ENCODE measurements at regions of chr9 and their contacts with region 1.

Region 1: DNA sequence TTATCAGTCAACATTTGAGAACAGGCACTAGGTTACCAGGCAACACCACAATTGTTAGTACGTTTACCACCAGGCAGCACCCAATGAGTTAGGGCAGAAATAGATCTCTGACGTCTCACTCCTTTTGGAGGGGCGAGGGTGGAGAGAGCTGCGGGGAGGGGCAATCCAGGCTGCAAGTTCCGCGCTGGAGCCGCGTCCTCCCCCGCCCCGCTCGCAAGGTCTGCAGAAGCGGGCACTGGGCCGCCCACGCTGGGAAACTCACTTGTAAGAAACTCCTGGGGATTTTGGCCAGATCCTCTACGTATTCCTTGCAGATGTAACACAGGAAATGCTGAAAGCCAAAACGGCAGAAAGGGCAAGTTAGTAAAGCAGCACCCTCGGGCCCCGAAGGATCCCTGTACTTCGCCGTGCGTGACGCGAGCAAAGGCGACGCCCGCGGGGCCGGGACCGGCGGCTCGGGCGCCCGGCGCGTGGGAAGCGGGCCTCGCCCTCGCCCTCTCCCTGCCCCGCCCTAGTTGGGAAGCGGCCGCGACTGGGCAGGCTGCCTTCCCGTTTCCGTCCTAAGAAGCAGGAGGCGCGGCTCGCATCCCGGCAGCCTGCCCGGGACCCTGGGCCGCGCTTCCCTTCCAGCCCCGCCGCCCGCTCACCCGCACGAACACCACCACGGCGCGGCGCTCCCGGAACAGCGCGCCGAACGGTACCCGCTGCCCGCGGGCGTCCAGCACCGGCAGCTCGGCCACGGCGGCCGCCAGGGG is 497 bp downstream of the PRXL2C start:
- DNase-seq: peak; percentile 81
- H3K4me3 ChIP-seq: peak overlapping the region; percentile 63 to 76 (median 65)
- H3K27ac ChIP-seq: peak overlapping the region; percentile 94 to 96 (median 96)
- H3K4me1 ChIP-seq: peaks cover 6 to 18% (median 10%) of the 10 kb centered on the region in 4 donors
- H3K27me3 ChIP-seq: no peaks in the 10 kb centered on the region
- CTCF ChIP-seq: peak in 1 of 5 experiments; percentile 14
- EP300 ChIP-seq: no peak
- POLR2A ChIP-seq: peak; percentile 38

Region 2: GRCh38 chr9:96418074-96418809 is 236.4 kb before region 1 on chr9 and contains the start of gene ZNF367:
- in situ Hi-C with region 1: no loop called
- intact Hi-C with region 1: loop called (anchors 10 kb)
- DNase-seq: peak; percentile 98
- H3K4me3 ChIP-seq: peak within 1 kb of the TSS; percentile 67 to 85 (median 72)
- H3K27ac ChIP-seq: peak within 1 kb of the TSS; percentile 99
- H3K4me1 ChIP-seq: peaks cover 16 to 44% (median 30%) of the 10 kb centered on the region in 4 donors
- H3K27me3 ChIP-seq: no peaks in the 10 kb centered on the region
- CTCF ChIP-seq: no peak
- EP300 ChIP-seq: no peak
- POLR2A ChIP-seq: peak; percentile 5
- total RNA-seq, gene ZNF367: 1.2 to 2.1 (median 1.4) TPM in 3 of 4 donors, not detected in the other

Region 3: GRCh38 chr9:96566498-96567207 is 88.0 kb before region 1 on chr9:
- in situ Hi-C with region 1: no loop called
- intact Hi-C with region 1: loop called (anchors 1 kb)
- DNase-seq: peak; percentile 90
- H3K4me3 ChIP-seq: peak overlapping the region; percentile 75 to 83 (median 82)
- H3K27ac ChIP-seq: peak overlapping the region; percentile 95 to 97 (median 97)
- H3K4me1 ChIP-seq: peaks cover 0 to 34% (median 14%) of the 10 kb centered on the region in 4 donors
- H3K27me3 ChIP-seq: no peaks in the 10 kb centered on the region
- CTCF ChIP-seq: peak; percentile 60 to 85 (median 71)
- EP300 ChIP-seq: no peak
- POLR2A ChIP-seq: peak; percentile 66